Activated CD8-positive, alpha-beta memory T cell treated with anti-CD3 and anti-CD28 coated beads, Interleukin-2, amount 10 ng/mL, durations not matched to agents 7 days and 5 days (primary cell): ENCODE measurements at regions of chr6 and their contacts with region 1.

Region 1: DNA sequence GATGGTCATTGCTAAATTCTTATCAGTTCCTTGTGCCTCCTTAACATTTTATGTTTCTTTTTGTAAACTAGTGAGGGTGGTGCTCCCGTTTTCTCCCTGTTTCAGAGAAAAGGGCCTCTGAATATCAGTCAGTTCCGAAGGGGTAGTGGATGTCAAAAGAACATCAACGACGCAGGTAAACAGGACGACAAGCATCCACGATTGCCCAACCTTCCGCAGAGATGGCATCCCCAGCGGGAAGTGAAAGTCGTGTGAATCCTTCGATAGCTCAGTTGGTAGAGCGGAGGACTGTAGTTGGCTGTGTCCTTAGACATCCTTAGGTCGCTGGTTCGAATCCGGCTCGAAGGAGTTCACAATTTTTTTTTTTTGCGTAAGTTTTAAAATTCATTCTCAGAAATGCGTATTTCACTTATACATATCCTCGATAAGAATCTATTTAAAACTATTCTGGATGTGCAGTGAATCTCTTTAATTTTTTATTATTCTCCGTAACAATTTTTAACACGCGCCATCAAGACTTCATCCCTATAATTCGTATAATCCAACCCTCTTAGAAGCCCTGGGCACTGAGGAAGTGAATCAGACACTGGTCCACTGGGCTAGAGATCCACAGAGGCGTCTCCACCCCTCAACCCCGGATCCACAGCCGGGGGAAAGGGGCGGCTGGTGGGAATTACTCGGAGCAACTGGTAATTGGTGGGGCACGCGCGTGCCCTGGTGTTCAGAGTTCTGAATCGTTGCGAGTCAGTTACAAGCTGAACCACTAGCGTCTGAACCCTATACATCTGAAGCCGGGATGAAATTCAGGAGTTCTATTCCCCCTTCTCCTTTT is 27.9 kb upstream of the ABT1 start:
- DNase-seq: peak; percentile 97
- ATAC-seq: peak; percentile 80
- H3K4me3 Mint-ChIP-seq: peak overlapping the region; percentile 98
- H3K27ac Mint-ChIP-seq: peak overlapping the region; percentile 93
- H3K4me1 Mint-ChIP-seq: peaks cover 38% of the 10 kb centered on the region
- H3K27me3 Mint-ChIP-seq: peaks cover 5% of the 10 kb centered on the region

Region 2: GRCh38 chr6:26329763-26330511 is 238.9 kb before region 1 on chr6:
- CTCF ChIA-PET with region 1: interaction called, 11 read pairs
- DNase-seq: peak; percentile 76
- ATAC-seq: peak; percentile 31
- H3K4me3 Mint-ChIP-seq: peak overlapping the region; percentile 76
- H3K27ac Mint-ChIP-seq: peak overlapping the region; percentile 75
- H3K4me1 Mint-ChIP-seq: peaks cover 57% of the 10 kb centered on the region
- H3K27me3 Mint-ChIP-seq: peaks cover 29% of the 10 kb centered on the region

Region 3: GRCh38 chr6:26457806-26458688 is 110.8 kb before region 1 on chr6 and contains the start of gene BTN2A1:
- CTCF ChIA-PET with region 1: no interaction called
- DNase-seq: peak; percentile 83
- ATAC-seq: peak; percentile 98
- H3K4me3 Mint-ChIP-seq: peak within 1 kb of the TSS; percentile 89
- H3K27ac Mint-ChIP-seq: peak within 1 kb of the TSS; percentile 92
- H3K4me1 Mint-ChIP-seq: peaks cover 46% of the 10 kb centered on the region
- H3K27me3 Mint-ChIP-seq: no peaks in the 10 kb centered on the region
- total RNA-seq, gene BTN2A1: 25.1 to 26.5 TPM

Region 4: GRCh38 chr6:26525838-26526237 is 43.0 kb before region 1 on chr6:
- CTCF ChIA-PET with region 1: no interaction called
- DNase-seq: no peak
- ATAC-seq: no peak
- H3K4me3 Mint-ChIP-seq: no peak overlapping the region
- H3K27ac Mint-ChIP-seq: no peak overlapping the region
- H3K4me1 Mint-ChIP-seq: peaks cover 19% of the 10 kb centered on the region
- H3K27me3 Mint-ChIP-seq: no peaks in the 10 kb centered on the region

Region 5: DNA sequence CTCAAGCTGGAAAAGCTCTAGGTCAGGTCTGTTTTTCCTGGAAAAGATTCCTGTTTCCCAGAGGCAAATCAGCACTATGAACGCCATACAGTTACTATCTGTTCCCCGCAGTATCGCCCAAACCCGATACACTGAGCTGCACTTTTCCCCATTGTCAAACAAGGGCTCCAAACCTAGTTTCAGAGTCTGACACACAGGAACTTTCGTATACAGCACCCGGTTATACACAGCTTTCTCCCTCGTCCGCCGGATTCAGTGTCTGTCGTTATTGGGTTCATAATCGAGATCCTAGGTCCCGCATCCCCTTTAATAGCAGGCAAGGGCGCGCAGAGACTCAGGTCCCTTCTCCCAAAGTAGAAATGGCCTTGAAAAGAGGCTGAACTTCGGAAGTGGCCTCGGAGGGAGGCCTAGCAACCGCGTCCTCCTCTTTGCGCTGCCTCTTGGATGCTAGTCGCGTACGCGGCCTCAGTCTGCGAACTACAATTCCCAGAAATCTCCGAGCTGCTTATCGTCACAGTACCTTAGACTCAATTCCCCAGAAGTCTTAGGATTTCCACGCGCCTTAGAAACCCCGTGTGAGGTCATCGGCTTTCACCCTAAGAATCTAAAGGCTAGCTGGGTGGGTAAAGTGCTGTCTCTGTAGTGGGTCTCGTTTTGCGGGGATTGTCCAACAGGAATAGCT is 854.0 kb after region 1 on chr6:
- CTCF ChIA-PET with region 1: no interaction called
- DNase-seq: no peak
- ATAC-seq: no peak
- H3K4me3 Mint-ChIP-seq: no peak overlapping the region
- H3K27ac Mint-ChIP-seq: no peak overlapping the region
- H3K4me1 Mint-ChIP-seq: no peaks in the 10 kb centered on the region
- H3K27me3 Mint-ChIP-seq: peaks cover 9% of the 10 kb centered on the region